PC-9 (cell line): ENCODE measurements at regions of chr17 and their contacts with region 1.

Region 1: GRCh38 chr17:60455378-60455777 is 33.1 kb downstream of the CHCT1 start:
- DNase-seq: no peak
- H3K4me3 ChIP-seq: no peak overlapping the region
- H3K27ac ChIP-seq: no peak overlapping the region
- H3K4me1 ChIP-seq: no peaks in the 10 kb centered on the region
- H3K27me3 ChIP-seq: no peaks in the 10 kb centered on the region
- CTCF ChIP-seq: no peak

Region 2: GRCh38 chr17:60077672-60078519 is 377.5 kb before region 1 on chr17:
- CTCF ChIA-PET with region 1: no interaction called
- POLR2A ChIA-PET with region 1: interaction called, 11 read pairs
- intact Hi-C with region 1: no loop called
- DNase-seq: no peak
- H3K4me3 ChIP-seq: peak overlapping the region; percentile 64
- H3K27ac ChIP-seq: peak overlapping the region; percentile 56
- H3K4me1 ChIP-seq: peaks cover 39% of the 10 kb centered on the region
- H3K27me3 ChIP-seq: no peaks in the 10 kb centered on the region
- CTCF ChIP-seq: no peak

Region 3: DNA sequence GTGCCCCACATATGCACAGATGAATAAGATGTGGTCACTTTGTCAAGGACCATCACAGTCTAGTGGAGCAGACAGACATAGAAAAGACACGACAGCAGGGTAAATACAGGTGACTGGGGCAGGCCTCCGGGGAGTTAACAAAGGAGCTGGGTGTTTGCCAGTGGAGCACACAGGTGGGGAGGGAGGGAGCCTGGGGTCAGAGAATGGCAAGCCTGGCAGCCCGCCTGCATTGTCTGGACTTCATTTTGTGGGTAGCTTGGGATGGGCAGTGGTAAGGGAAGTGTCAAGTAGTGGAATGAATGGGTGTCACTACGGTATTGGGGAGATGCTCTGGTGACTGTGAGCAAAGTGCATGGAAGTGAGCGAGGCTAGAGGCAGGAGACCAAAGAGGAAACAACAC is 23.9 kb before region 1 on chr17:
- CTCF ChIA-PET with region 1: no interaction called
- POLR2A ChIA-PET with region 1: no interaction called
- intact Hi-C with region 1: no loop called
- DNase-seq: peak in 1 of 2 experiments; percentile 17
- H3K4me3 ChIP-seq: no peak overlapping the region
- H3K27ac ChIP-seq: no peak overlapping the region
- H3K4me1 ChIP-seq: no peaks in the 10 kb centered on the region
- H3K27me3 ChIP-seq: no peaks in the 10 kb centered on the region
- CTCF ChIP-seq: no peak